Transverse colon (tissue), 4 donors: ENCODE measurements at regions of chr3 and their contacts with region 1.

Region 1: DNA sequence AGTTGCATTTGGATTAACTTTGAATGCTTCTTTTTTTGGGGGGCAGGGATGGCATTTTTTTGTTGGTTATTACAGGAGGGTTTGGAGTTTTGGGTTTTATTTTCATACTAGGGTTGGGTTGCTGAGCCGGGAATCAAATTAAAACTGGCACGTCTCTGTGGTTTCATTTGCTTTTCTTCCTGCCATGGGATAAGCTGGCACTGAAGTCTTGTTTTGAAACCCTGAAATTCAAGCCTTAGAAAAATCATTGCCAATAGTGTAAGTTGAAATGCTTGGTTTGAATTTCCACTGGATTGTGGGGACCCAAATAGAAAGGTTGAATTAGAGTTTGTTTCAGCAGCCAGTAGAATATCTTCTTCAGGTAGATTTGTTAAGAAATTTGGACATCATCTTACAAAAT is 193.1 kb upstream of the DCBLD2 start:
- DNase-seq: no peak
- H3K4me3 ChIP-seq: no peak overlapping the region
- H3K27ac ChIP-seq: no peak overlapping the region
- H3K4me1 ChIP-seq: no peaks in the 10 kb centered on the region
- H3K27me3 ChIP-seq: no peaks in the 10 kb centered on the region
- CTCF ChIP-seq: no peak
- EP300 ChIP-seq: no peak
- POLR2A ChIP-seq: no peak

Region 2: GRCh38 chr3:99118381-99118780 is 23.8 kb after region 1 on chr3:
- in situ Hi-C with region 1: no loop called
- intact Hi-C with region 1: loop called (anchors 2 kb)
- DNase-seq: no peak
- H3K4me3 ChIP-seq: no peak overlapping the region
- H3K27ac ChIP-seq: no peak overlapping the region
- H3K4me1 ChIP-seq: no peaks in the 10 kb centered on the region
- H3K27me3 ChIP-seq: no peaks in the 10 kb centered on the region
- CTCF ChIP-seq: no peak
- EP300 ChIP-seq: no peak
- POLR2A ChIP-seq: no peak